Heart right ventricle (tissue), 16 donors: ENCODE measurements at regions of chr12 and their contacts with region 1.

Region 1: GRCh38 chr12:2064071-2064507 is 11.3 kb downstream of the CACNA1C start:
- DNase-seq: no peak
- ATAC-seq: peak in 6 of 8 donors; percentile 30 to 51 (median 40)
- H3K4me3 ChIP-seq: peak overlapping the region in 4 of 10 donors; percentile 2 to 21 (median 5)
- H3K27ac ChIP-seq: peak overlapping the region; percentile 32 to 76 (median 62)
- H3K4me1 ChIP-seq: peaks cover 12 to 84% (median 46%) of the 10 kb centered on the region in 9 donors
- H3K27me3 ChIP-seq: no peaks in the 10 kb centered on the region
- CTCF ChIP-seq: no peak

Region 2: DNA sequence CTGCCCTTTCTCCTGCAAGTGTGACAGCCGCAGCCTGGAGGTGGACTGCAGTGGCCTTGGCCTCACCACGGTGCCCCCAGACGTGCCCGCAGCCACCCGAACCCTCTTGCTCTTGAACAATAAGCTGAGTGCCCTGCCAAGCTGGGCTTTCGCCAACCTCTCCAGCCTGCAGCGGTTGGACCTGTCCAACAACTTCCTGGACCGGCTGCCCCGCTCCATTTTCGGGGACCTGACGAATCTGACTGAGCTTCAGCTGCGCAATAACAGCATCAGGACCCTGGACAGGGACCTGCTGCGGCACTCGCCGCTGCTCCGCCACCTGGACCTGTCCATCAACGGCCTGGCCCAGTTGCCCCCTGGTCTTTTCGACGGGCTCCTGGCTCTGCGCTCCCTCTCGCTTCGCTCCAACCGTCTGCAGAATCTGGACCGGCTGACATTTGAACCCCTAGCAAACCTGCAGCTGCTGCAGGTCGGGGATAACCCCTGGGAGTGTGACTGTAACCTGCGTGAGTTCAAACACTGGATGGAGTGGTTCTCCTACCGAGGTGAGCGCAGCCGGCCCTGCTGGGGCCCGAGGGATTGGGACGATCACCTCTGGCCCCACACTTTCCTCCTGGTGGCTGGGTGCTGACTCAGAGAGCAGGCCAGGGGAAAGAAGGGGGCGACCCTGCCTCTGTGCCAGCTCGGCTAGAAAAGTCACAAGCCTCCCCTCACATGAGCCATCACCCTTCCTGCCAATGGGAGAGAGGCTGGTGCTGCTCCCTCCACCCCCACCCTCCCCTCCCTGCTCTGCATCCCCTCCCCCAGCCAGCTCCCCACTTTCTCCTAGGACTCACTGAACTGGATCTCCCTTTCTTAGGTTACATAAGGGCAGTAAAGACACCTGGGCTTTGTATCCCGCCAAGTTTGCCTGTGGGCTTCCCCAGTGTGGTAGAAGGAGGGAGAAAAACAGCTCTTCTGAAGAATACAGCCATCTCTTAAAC is 232.8 kb before region 1 on chr12:
- intact Hi-C with region 1: no loop called
- DNase-seq: peak; percentile 42 to 61
- ATAC-seq: peak; percentile 71 to 92 (median 78)
- H3K4me3 ChIP-seq: no peak overlapping the region
- H3K27ac ChIP-seq: no peak overlapping the region
- H3K4me1 ChIP-seq: peaks cover 0 to 2% (median 0%) of the 10 kb centered on the region in 9 donors
- H3K27me3 ChIP-seq: peaks cover 0 to 87% (median 58%) of the 10 kb centered on the region in 7 donors
- CTCF ChIP-seq: no peak

Region 3: DNA sequence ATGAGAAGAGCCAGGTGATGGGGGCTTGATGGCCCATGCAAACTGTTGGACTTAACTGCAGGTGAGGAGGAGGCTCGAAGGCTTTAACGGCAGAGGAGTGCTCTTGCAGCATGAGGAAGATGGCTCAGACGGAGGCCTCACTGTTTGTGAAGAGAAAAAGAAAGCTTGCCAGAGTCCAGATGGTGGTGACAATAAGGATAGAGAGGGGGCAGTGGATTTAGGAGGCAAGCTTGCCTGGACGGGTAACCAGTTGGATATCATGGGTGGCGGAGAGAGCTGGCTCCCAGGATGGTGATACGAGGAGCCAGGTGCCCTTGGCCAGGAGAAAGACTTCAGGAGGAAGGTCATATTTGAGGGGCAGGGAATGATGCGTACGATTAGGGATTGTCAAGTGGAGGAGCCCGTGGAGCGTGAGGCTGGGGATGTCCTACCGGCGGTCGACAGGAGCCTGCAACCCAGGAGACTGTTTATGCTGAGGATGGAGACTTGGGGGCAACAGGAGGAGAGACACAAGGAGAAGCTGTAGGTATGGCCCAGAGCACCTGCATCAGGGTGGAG is 60.5 kb after region 1 on chr12:
- intact Hi-C with region 1: loop called in 1 of 10 experiments (anchors 5 kb)
- DNase-seq: no peak
- ATAC-seq: no peak
- H3K4me3 ChIP-seq: no peak overlapping the region
- H3K27ac ChIP-seq: peak overlapping the region in 1 of 10 donors; percentile 3
- H3K4me1 ChIP-seq: peaks cover 9 to 49% (median 21%) of the 10 kb centered on the region in 9 donors
- H3K27me3 ChIP-seq: no peaks in the 10 kb centered on the region
- CTCF ChIP-seq: no peak

Region 4: GRCh38 chr12:2154050-2154449 is 90.0 kb after region 1 on chr12:
- intact Hi-C with region 1: loop called in 1 of 10 experiments (anchors 10 kb)
- DNase-seq: peak in 1 of 2 donors; percentile 36
- ATAC-seq: peak; percentile 18 to 70 (median 43)
- H3K4me3 ChIP-seq: no peak overlapping the region
- H3K27ac ChIP-seq: peak overlapping the region in 9 of 10 donors; percentile 41 to 79 (median 72)
- H3K4me1 ChIP-seq: peaks cover 29 to 92% (median 67%) of the 10 kb centered on the region in 9 donors
- H3K27me3 ChIP-seq: no peaks in the 10 kb centered on the region
- CTCF ChIP-seq: no peak

Region 5: DNA sequence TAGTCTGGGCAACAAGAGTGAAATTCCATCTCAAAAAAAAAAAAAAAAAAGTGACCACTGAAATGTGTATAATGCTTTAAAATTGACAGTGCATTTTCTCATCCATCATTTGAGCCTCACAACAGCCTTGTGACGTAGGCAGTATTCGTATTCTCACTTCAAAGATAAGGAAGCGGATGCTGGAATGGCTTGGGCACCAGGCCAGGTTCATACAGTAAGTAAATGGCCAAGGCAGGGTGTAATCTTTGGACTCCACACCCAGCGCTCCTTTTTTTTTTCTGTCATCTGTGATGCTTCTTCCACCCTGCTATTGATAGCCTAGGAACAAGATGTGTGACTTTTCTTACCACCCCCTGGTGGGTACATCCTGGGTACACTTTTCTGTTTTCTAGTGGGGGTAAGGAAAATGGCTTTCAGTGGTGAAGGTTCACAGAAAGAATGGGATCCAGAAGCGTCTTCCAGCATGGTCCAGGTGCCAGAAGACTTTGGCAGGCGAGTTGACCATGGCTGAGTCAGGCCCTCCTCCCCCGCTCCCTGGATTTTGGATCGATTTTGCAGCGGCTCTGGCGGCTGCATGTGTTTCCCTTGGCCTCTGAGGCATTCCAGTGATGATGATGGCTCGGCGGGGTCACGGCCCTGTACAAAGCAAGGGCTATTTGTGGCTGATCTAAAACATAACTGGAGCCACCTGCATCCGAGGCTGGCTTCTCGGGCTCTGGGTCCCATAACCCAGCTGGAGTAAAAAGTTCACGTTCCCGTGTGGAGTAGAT is 99.3 kb after region 1 on chr12:
- intact Hi-C with region 1: loop called in 3 of 10 experiments (anchors 5 to 10 kb)
- DNase-seq: peak; percentile 85 to 93
- ATAC-seq: peak; percentile 85 to 95 (median 92)
- H3K4me3 ChIP-seq: no peak overlapping the region
- H3K27ac ChIP-seq: peak overlapping the region; percentile 47 to 94 (median 81)
- H3K4me1 ChIP-seq: peaks cover 23 to 67% (median 44%) of the 10 kb centered on the region in 9 donors
- H3K27me3 ChIP-seq: no peaks in the 10 kb centered on the region
- CTCF ChIP-seq: peak in 1 of 9 donors; percentile 11

Region 6: DNA sequence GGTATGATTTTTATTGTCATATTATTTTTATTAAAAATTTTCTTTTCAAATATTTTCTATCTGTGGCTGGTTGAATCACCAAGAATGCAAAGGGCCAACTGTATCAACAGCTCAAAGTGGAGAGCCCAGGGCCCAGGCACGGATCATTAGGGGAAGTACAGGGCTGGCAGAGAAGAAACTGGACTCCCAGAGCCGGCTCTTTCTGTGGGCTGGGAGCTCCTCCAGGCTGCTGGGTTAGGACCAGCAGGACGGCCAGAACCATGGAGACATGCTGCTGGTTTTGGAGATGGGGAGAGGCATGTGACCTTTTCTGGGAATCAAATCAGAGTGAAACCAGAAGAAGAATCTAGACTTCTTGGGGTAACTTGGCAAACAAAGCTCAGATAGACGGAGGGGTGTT is 209.2 kb after region 1 on chr12:
- intact Hi-C with region 1: loop called in 4 of 10 experiments (anchors 5 kb)
- DNase-seq: peak in 1 of 2 donors; percentile 50
- ATAC-seq: peak; percentile 56 to 77 (median 66)
- H3K4me3 ChIP-seq: no peak overlapping the region
- H3K27ac ChIP-seq: peak overlapping the region in 5 of 10 donors; percentile 8 to 64 (median 19)
- H3K4me1 ChIP-seq: peaks cover 5 to 76% (median 38%) of the 10 kb centered on the region in 9 donors
- H3K27me3 ChIP-seq: no peaks in the 10 kb centered on the region
- CTCF ChIP-seq: peak in 6 of 9 donors; percentile 22 to 66 (median 54)